MCF 10A (cell line): ENCODE measurements at regions of chr2 and their contacts with region 1.

Region 1: GRCh38 chr2:215290980-215291599 is 20.8 kb upstream of the ATIC start:
- DNase-seq: peak; percentile 62
- H3K4me3 Mint-ChIP-seq: no peak overlapping the region
- H3K27ac Mint-ChIP-seq: no peak overlapping the region
- H3K4me1 Mint-ChIP-seq: no peaks in the 10 kb centered on the region
- H3K27me3 Mint-ChIP-seq: no peaks in the 10 kb centered on the region
- CTCF ChIP-seq: no peak

Region 2: GRCh38 chr2:215249501-215249900 is 41.6 kb before region 1 on chr2:
- CTCF ChIA-PET with region 1: no interaction called
- POLR2A ChIA-PET with region 1: no interaction called
- intact Hi-C with region 1: loop called (anchors 2 kb)
- DNase-seq: no peak
- H3K4me3 Mint-ChIP-seq: no peak overlapping the region
- H3K27ac Mint-ChIP-seq: no peak overlapping the region
- H3K4me1 Mint-ChIP-seq: no peaks in the 10 kb centered on the region
- H3K27me3 Mint-ChIP-seq: no peaks in the 10 kb centered on the region
- CTCF ChIP-seq: no peak